ENCODE measurements at regions of chr2 and their contacts with region 1.

Region 1: DNA sequence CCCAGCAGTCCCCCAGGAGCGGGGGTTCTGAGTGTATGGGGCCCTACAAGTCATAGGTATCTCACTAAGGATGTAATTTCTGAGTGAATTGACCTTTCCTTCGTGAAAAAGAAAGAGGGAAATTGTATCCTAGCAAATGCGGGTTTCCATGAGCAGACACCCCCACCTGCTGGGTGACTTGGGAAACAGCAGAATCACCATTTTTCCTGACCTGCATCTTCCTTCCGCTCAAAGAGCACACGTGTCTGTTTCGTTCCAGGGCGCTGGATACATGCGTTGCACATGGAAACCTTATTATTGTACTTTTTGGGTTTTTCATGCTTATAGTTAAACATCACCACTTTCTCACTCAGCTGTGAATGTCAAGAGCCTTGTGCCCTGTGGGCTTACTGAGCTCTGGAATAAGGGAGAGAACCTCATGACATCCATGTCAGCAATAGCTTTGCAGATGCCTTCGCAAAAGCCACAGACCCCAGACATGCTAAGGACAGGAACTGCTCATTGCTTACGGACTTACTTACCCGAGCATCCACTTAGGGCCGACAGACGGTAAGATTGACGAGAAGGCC is 132.8 kb downstream of the TPO start:
- DNase-seq: peak; percentile 48 to 62 (median 60)
- ATAC-seq: peak; percentile 58
- H3K4me3 ChIP-seq: no peak overlapping the region
- H3K27ac ChIP-seq: no peak overlapping the region
- H3K4me1 ChIP-seq: peaks cover 0 to 6% of the 10 kb centered on the region in 2 experiments; a peak in 2 of 5 replicates
- H3K27me3 ChIP-seq: peaks cover 0 to 21% of the 10 kb centered on the region in 2 experiments; a peak in 2 of 5 replicates
- CTCF ChIP-seq: peak; percentile 69 to 84 (median 81)
- EP300 ChIP-seq: no peak
- POLR2A ChIP-seq: no peak
- RAD21 ChIP-seq: peak; percentile 74 to 83

Region 2: GRCh38 chr2:529425-529824 is 1016.7 kb before region 1 on chr2:
- CTCF ChIA-PET with region 1: interaction called, 3 read pairs
- POLR2A ChIA-PET with region 1: no interaction called
- in situ Hi-C with region 1: no loop called
- intact Hi-C with region 1: loop called (anchors 2 kb)
- DNase-seq: peak in 2 of 4 experiments; percentile 30 to 37
- ATAC-seq: peak; percentile 61; the same call in 1 of the 3 replicates
- H3K4me3 ChIP-seq: no peak overlapping the region
- H3K27ac ChIP-seq: no peak overlapping the region
- H3K4me1 ChIP-seq: no peaks in the 10 kb centered on the region
- H3K27me3 ChIP-seq: peaks cover 0 to 18% of the 10 kb centered on the region in 2 experiments; a peak in 4 of 5 replicates
- CTCF ChIP-seq: peak; percentile 33 to 63 (median 53); a peak in 3 of 6 replicates
- EP300 ChIP-seq: no peak
- POLR2A ChIP-seq: no peak
- RAD21 ChIP-seq: peak in 1 of 2 experiments; percentile 48; a peak in 3 of 4 replicates

Region 3: GRCh38 chr2:714005-714741 is 831.9 kb before region 1 on chr2:
- CTCF ChIA-PET with region 1: interaction called, 4 read pairs
- POLR2A ChIA-PET with region 1: no interaction called
- in situ Hi-C with region 1: loop called (anchors 25 kb)
- intact Hi-C with region 1: loop called (anchors 5 kb)
- DNase-seq: peak in 3 of 4 experiments; percentile 33 to 50 (median 34)
- ATAC-seq: peak; percentile 81
- H3K4me3 ChIP-seq: no peak overlapping the region
- H3K27ac ChIP-seq: no peak overlapping the region
- H3K4me1 ChIP-seq: no peaks in the 10 kb centered on the region; a peak in 1 of 5 replicates
- H3K27me3 ChIP-seq: peaks cover 0 to 27% of the 10 kb centered on the region in 2 experiments; a peak in 4 of 5 replicates
- CTCF ChIP-seq: peak; percentile 49 to 63 (median 49); a peak in 5 of 6 replicates
- EP300 ChIP-seq: no peak
- POLR2A ChIP-seq: no peak
- RAD21 ChIP-seq: peak; percentile 28 to 50; a peak in 2 of 4 replicates

Region 4: DNA sequence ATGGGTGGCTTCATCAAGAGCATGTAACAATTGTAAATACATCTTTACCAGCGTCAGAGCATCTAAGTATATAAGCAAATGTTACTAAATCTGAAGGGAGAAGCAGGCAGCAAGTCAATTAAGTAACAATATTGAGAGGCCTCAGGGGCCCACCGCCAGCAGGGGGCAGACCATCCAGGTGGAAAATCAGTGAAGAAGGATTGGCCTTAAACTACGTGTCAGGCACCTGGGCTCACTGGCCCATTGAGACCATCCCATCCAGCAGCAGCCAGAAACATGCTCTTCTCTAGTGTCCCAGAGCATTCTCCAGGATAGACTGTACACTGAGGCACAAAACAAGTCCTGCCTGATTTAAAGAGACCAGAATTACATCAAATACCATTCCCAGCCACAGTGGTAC is 691.6 kb before region 1 on chr2:
- CTCF ChIA-PET with region 1: interaction called, 5 read pairs
- POLR2A ChIA-PET with region 1: no interaction called
- in situ Hi-C with region 1: no loop called
- intact Hi-C with region 1: loop called (anchors 1 kb)
- DNase-seq: peak; percentile 54 to 58 (median 56)
- ATAC-seq: peak; percentile 85
- H3K4me3 ChIP-seq: no peak overlapping the region
- H3K27ac ChIP-seq: no peak overlapping the region
- H3K4me1 ChIP-seq: no peaks in the 10 kb centered on the region
- H3K27me3 ChIP-seq: peaks cover 6 to 14% of the 10 kb centered on the region in 2 experiments; a peak in 4 of 5 replicates
- CTCF ChIP-seq: peak; percentile 56 to 77 (median 61)
- EP300 ChIP-seq: no peak
- POLR2A ChIP-seq: no peak
- RAD21 ChIP-seq: peak in 1 of 2 experiments; percentile 56; a peak in 2 of 4 replicates

Region 5: GRCh38 chr2:950080-950966 is 595.8 kb before region 1 on chr2 and contains the start of gene SNTG2:
- CTCF ChIA-PET with region 1: no interaction called
- POLR2A ChIA-PET with region 1: no interaction called
- in situ Hi-C with region 1: no loop called
- intact Hi-C with region 1: loop called (anchors 5 kb)
- DNase-seq: peak; percentile 32 to 88 (median 86)
- ATAC-seq: peak; percentile 99
- H3K4me3 ChIP-seq: peak within 1 kb of the TSS; percentile 18
- H3K27ac ChIP-seq: no peak within 1 kb of the TSS
- H3K4me1 ChIP-seq: peaks cover 0 to 12% of the 10 kb centered on the region in 2 experiments; a peak in 1 of 5 replicates
- H3K27me3 ChIP-seq: peaks cover 9 to 21% of the 10 kb centered on the region in 2 experiments; a peak in 3 of 5 replicates
- CTCF ChIP-seq: no peak
- EP300 ChIP-seq: no peak
- POLR2A ChIP-seq: no peak
- RAD21 ChIP-seq: no peak
- polyA plus RNA-seq, gene SNTG2: not detected

Region 6: DNA sequence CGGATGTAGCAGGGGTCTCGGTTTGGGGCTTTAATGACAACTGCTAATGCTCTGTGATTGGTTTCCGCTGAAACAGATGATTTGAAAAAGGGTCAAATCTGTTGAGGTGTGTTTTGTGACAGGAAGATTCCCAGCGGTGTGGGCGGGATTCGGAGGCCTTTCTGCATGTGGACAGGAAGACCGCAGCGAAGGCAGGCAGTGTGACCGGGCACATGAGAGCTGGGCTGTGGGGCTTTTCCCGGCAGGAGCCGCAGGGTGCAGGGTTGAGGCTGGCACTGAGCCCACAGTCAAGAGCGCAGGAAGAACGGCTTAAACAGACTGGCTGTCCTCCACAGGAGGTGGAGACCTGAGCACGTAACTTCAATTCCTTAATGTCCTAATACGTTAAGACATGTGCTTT is 312.8 kb before region 1 on chr2:
- CTCF ChIA-PET with region 1: no interaction called
- POLR2A ChIA-PET with region 1: no interaction called
- in situ Hi-C with region 1: no loop called
- intact Hi-C with region 1: loop called (anchors 10 kb)
- DNase-seq: no peak
- ATAC-seq: no peak
- H3K4me3 ChIP-seq: no peak overlapping the region
- H3K27ac ChIP-seq: no peak overlapping the region
- H3K4me1 ChIP-seq: no peaks in the 10 kb centered on the region
- H3K27me3 ChIP-seq: peaks cover 0 to 35% of the 10 kb centered on the region in 2 experiments; a peak in 2 of 5 replicates
- CTCF ChIP-seq: no peak
- EP300 ChIP-seq: no peak
- POLR2A ChIP-seq: no peak
- RAD21 ChIP-seq: no peak